ENCODE measurements at regions of chr20 and their contacts with region 1.

Region 1: GRCh38 chr20:43528258-43528875 is 20.9 kb downstream of the L3MBTL1 start:
- DNase-seq: no peak
- ATAC-seq: no peak
- H3K4me3 ChIP-seq: no peak overlapping the region
- H3K27ac ChIP-seq: no peak overlapping the region
- H3K4me1 ChIP-seq: no peaks in the 10 kb centered on the region
- H3K27me3 ChIP-seq: no peaks in the 10 kb centered on the region
- CTCF ChIP-seq: no peak

Region 2: DNA sequence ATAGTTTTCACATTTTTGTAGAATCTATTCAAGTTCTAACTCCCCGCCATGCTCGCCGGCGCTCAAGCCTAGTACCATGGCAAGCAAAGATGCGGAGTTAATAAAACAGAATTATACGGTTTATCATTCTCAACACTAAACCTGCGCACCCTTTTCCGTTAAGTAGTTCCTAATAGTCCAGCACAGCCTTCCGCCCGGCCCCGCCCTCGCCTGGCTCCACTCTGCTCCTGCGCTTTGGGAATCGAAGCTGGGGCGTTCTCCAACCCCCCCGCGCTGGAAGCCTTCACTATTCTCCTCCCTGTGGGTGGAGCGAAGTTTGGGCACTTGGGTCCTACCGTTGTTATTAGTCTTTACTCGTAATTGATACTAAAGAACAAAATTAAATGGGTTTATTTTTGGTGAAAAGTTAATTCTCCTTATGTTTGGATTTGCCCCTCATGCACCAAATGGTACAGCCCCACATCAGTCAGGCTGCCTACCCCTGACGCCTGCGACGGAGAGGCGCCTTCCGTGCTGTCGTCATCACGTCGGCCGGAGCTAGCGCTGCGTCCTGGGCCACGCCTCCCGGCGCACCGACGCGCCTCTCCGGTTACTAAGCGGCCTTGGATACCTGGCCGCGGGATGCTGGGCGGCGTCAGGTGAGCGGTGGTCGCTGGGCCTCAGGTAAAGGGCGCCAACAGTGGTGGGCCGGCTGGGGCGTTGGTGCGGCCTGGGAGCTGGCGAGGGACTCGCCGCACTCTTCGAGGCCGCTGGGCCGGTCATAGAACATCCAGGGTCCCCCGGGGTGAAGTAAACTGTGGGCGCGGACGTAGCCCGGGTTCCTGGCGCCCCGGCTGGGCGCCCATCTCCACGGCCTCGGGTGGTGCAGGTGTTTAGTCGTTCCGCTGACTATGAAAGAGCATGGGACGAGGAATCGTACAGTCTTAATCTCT is 62.3 kb after region 1 on chr20 and contains the start of gene IFT52:
- CTCF ChIA-PET with region 1: no interaction called
- POLR2A ChIA-PET with region 1: interaction called, 14 read pairs
- intact Hi-C with region 1: no loop called
- DNase-seq: peak; percentile 97
- ATAC-seq: peak; percentile 99
- H3K4me3 ChIP-seq: peak within 1 kb of the TSS; percentile 93
- H3K27ac ChIP-seq: peak within 1 kb of the TSS; percentile 66
- H3K4me1 ChIP-seq: peaks cover 14% of the 10 kb centered on the region
- H3K27me3 ChIP-seq: no peaks in the 10 kb centered on the region
- CTCF ChIP-seq: no peak
- total RNA-seq, gene IFT52: 22.9 and 23.0 TPM in 2 replicates

Region 3: DNA sequence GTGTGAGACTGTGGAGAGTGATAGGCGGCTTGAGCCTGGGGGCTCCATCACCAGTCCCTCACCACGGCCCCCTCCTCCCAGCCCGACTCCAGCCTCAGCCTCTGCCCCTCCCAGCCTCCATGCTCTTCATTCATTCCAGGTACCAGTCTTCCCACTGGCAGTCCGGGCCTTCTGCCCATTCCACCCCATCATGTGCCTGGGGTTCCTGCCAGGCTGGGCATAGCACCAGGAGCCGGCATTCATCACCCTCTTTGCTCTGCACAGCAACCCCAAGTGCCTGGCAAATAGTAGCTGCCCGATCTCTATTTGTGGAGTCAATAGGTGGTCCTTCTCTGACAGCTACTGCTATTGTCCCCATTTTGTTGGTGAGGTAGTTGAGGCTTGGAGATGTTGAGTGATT is 238.0 kb after region 1 on chr20:
- CTCF ChIA-PET with region 1: no interaction called
- POLR2A ChIA-PET with region 1: interaction called, 11 read pairs
- intact Hi-C with region 1: no loop called
- DNase-seq: no peak
- ATAC-seq: no peak; the same call in 1 of the 2 replicates
- H3K4me3 ChIP-seq: no peak overlapping the region
- H3K27ac ChIP-seq: no peak overlapping the region
- H3K4me1 ChIP-seq: peaks cover 10% of the 10 kb centered on the region
- H3K27me3 ChIP-seq: 0 out of 2 replicates have a peak, but pooled peaks cover 3% of the 10 kb centered on the region
- CTCF ChIP-seq: no peak